Lower leg skin (tissue), 4 donors: ENCODE measurements at regions of chr13 and their contacts with region 1.

Region 1: GRCh38 chr13:31063772-31064171 is 97.9 kb downstream of the HSPH1 start:
- DNase-seq: no peak
- H3K4me3 ChIP-seq: no peak overlapping the region
- CTCF ChIP-seq: no peak
- POLR2A ChIP-seq: no peak

Region 2: DNA sequence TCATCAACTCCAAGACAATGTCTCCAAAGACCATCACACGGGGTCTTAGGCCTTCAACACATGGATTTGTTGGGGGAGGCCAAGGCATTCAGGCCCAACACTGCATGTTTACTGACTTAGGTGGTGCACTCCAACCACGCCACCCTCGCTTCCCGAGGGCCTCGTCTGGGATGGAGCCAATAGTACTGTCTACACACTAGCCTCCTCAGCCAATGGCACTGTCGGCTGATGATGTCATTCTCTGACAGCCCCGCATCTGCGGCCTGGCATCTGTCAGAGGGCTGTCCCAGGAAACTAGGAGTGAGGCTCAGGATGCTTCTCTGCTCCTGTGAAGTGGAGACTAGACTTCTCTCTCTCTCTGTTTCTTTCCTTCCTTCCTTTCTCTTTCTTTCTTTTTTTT is 34.7 kb before region 1 on chr13:
- intact Hi-C with region 1: loop called (anchors 1 kb)
- DNase-seq: no peak
- H3K4me3 ChIP-seq: no peak overlapping the region
- CTCF ChIP-seq: no peak
- POLR2A ChIP-seq: no peak

Region 3: DNA sequence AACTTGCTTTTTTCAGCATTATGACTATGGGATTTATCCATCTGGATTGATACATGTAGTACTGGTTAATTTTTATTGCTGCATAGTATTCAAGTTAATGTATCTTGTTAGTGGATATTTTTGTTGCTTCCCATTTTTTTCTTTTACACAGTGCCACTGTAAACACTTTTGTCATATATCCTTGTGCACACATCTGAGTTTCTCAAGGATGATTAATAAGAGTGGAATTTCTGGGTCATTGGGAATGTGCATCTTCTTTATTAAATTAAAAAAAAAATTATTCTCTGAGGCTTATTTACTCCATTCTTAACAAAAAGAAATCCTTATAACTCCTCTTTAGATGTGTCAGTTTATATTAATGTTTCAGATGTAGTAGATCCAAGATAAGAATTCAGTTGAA is 163.3 kb after region 1 on chr13:
- intact Hi-C with region 1: no loop called
- DNase-seq: no peak
- H3K4me3 ChIP-seq: no peak overlapping the region
- CTCF ChIP-seq: no peak
- POLR2A ChIP-seq: no peak